Activated naive CD4-positive, alpha-beta T cell treated with anti-CD3 and anti-CD28 coated beads for 36 hours (primary cell): ENCODE measurements at regions of chr12 and their contacts with region 1.

Region 1: DNA sequence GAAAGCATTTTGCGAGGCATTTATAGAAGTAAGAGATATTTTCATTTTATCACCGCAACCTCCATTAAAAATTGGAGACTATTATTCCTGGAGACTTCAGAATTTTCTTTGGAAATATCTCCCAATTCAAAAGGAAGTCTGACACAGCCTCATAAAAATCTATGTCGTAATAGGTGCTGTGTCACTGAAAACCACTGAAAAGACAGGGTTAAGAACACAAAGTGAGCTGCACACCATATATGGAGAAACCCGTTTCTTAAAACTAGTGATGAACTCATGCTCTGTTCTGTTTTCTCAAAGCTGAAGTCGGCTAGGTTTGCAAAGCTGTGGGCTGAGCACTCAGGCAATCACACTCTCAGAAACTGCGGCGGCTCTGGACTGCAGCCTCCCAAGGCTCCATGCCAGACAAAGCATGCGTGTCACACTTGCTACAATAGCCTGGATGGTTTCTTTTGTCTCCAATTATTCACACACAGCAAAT is at the start of gene GLIPR1:
- DNase-seq: peak; percentile 77
- H3K4me3 Mint-ChIP-seq: peak within 1 kb of the TSS; percentile 87
- H3K27ac Mint-ChIP-seq: peak within 1 kb of the TSS; percentile 82
- H3K4me1 Mint-ChIP-seq: peaks cover 78% of the 10 kb centered on the region
- H3K27me3 Mint-ChIP-seq: no peaks in the 10 kb centered on the region
- total RNA-seq, gene GLIPR1: 1.3 to 1.5 TPM

Region 2: GRCh38 chr12:75334384-75335030 is 146.0 kb before region 1 on chr12 and contains the start of gene GLIPR1L1:
- CTCF ChIA-PET with region 1: interaction called, 23 read pairs
- intact Hi-C with region 1: loop called (anchors 1 kb)
- DNase-seq: peak; percentile 92
- H3K4me3 Mint-ChIP-seq: peak within 1 kb of the TSS; percentile 44
- H3K27ac Mint-ChIP-seq: no peak within 1 kb of the TSS
- H3K4me1 Mint-ChIP-seq: peaks cover 18% of the 10 kb centered on the region
- H3K27me3 Mint-ChIP-seq: peaks cover 32% of the 10 kb centered on the region
- total RNA-seq, gene GLIPR1L1: not detected

Region 3: GRCh38 chr12:75437564-75437963 is 42.9 kb before region 1 on chr12:
- CTCF ChIA-PET with region 1: interaction called, 8 read pairs
- intact Hi-C with region 1: loop called (anchors 1 kb)
- DNase-seq: no peak
- H3K4me3 Mint-ChIP-seq: no peak overlapping the region
- H3K27ac Mint-ChIP-seq: no peak overlapping the region
- H3K4me1 Mint-ChIP-seq: peaks cover 2% of the 10 kb centered on the region
- H3K27me3 Mint-ChIP-seq: peaks cover 9% of the 10 kb centered on the region

Region 4: GRCh38 chr12:75526655-75527511 is 46.4 kb after region 1 on chr12:
- CTCF ChIA-PET with region 1: interaction called, 16 read pairs
- intact Hi-C with region 1: no loop called
- DNase-seq: no peak
- H3K4me3 Mint-ChIP-seq: no peak overlapping the region
- H3K27ac Mint-ChIP-seq: no peak overlapping the region
- H3K4me1 Mint-ChIP-seq: peaks cover 3% of the 10 kb centered on the region
- H3K27me3 Mint-ChIP-seq: peaks cover 27% of the 10 kb centered on the region

Region 5: DNA sequence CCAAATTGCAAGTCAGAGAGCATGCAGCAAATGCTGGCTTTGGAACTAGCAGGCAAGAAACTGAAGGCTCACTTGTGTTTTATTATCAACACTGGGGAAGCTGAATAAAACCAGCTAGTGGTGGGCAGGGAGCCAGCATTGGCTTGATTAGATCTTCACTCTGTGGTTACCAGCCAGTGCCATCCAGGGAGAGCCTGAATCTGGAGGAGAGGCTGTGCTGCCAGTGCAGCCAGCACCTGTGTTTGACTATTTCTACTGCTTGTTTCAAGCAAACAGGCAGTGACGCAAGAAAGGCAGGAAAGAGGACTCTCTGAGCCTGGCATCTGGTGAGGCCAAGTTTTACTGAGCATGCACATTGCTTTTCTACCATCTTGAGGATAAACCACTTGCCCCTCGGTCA is 304.1 kb after region 1 on chr12:
- CTCF ChIA-PET with region 1: no interaction called
- intact Hi-C with region 1: no loop called
- DNase-seq: no peak
- H3K4me3 Mint-ChIP-seq: no peak overlapping the region
- H3K27ac Mint-ChIP-seq: no peak overlapping the region
- H3K4me1 Mint-ChIP-seq: peaks cover 5% of the 10 kb centered on the region
- H3K27me3 Mint-ChIP-seq: peaks cover 5% of the 10 kb centered on the region

Region 6: DNA sequence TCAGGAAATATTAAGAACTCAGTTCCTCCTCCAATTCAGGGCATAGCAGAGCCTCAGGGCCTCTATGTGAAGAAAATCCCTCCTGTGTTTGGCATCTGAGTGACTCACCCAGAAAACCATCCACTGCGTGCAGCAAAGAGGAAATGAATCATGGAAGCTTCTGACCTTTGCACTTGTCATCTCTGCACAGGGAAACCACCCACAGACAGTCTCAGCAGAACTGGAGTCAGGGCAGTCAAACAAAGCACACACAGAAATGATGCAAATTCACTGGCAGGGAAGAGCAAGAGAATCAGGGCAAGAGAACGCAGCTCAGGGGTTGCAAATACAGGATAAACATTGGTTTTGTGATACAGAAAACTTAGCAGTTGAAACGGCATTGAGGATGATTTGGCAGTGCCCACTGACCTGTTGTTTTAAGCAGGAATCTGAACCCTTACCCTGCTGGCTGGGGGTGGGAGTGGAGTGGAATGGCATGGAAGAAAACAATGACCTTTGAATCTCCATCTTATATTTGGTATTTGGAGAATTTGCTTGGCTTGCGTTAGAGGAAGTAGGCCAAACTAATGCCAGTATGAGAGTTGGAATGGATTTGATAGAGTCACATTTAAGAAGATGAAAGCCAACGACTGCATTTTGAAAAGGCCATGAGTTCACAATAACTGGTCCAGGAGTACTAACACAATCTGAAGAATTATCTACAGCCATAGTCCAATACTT is 497.6 kb after region 1 on chr12:
- CTCF ChIA-PET with region 1: no interaction called
- intact Hi-C with region 1: loop called (anchors 1 kb)
- DNase-seq: peak; percentile 90
- H3K4me3 Mint-ChIP-seq: peak overlapping the region; percentile 57
- H3K27ac Mint-ChIP-seq: peak overlapping the region; percentile 99
- H3K4me1 Mint-ChIP-seq: peaks cover 60% of the 10 kb centered on the region
- H3K27me3 Mint-ChIP-seq: no peaks in the 10 kb centered on the region

Region 7: GRCh38 chr12:76348079-76348901 is 867.8 kb after region 1 on chr12 and contains the start of gene BBS10:
- CTCF ChIA-PET with region 1: no interaction called
- intact Hi-C with region 1: loop called (anchors 2 kb)
- DNase-seq: peak; percentile 92
- H3K4me3 Mint-ChIP-seq: peak within 1 kb of the TSS; percentile 90
- H3K27ac Mint-ChIP-seq: peak within 1 kb of the TSS; percentile 86
- H3K4me1 Mint-ChIP-seq: peaks cover 22% of the 10 kb centered on the region
- H3K27me3 Mint-ChIP-seq: no peaks in the 10 kb centered on the region
- total RNA-seq, gene BBS10: 3.3 TPM

Region 8: DNA sequence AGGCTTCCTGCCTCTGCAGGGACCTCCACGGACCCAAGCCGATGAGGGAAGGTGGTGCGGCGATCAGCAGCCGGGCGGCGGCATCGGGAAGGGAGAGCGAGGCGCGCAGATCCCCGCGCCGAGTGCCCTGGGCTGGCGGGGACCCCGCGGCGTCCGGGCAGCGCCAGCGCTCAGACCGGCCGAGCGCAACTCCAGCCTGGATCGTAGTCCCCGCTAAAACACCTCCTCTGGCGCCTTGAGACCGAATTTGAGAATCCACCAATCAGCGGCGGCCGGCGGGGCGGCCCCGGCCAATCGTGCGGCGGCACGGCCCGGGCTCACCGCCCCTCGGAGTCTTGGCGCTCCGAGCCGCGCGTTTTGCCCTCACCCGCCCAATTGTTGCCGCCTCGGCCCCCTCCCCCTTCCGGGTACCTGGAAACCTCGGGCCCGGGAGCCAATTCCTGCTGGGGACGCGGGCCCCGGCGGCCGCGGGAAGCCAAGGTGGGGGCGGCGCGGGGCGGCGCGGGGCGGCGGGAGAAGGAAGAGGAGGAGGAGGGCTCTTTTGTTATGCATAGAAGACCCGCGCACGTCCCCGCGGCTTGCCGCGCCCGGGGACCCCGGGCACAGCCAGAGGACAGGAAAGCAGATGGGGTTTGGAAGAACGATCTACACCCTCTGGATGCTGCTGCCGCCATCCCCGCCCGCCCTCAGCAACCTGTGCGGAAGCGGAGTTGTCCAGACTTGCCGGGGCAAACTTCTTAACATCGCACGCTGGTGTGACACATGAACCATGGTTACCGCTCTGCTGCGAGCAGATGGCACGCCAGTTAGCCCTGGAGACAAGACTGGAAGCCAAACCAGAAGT is 1585.1 kb after region 1 on chr12 and contains the start of gene E2F7:
- CTCF ChIA-PET with region 1: no interaction called
- intact Hi-C with region 1: loop called (anchors 10 kb)
- DNase-seq: peak; percentile 90
- H3K4me3 Mint-ChIP-seq: peak within 1 kb of the TSS; percentile 79
- H3K27ac Mint-ChIP-seq: peak within 1 kb of the TSS; percentile 47
- H3K4me1 Mint-ChIP-seq: peaks cover 10% of the 10 kb centered on the region
- H3K27me3 Mint-ChIP-seq: peaks cover 46% of the 10 kb centered on the region
- total RNA-seq, gene E2F7: 9.6 to 9.9 TPM